Activated CD8-positive, alpha-beta T cell treated with anti-CD3 and anti-CD28 coated beads for 36 hours (primary cell): ENCODE measurements at regions of chr15 and their contacts with region 1.

Region 1: DNA sequence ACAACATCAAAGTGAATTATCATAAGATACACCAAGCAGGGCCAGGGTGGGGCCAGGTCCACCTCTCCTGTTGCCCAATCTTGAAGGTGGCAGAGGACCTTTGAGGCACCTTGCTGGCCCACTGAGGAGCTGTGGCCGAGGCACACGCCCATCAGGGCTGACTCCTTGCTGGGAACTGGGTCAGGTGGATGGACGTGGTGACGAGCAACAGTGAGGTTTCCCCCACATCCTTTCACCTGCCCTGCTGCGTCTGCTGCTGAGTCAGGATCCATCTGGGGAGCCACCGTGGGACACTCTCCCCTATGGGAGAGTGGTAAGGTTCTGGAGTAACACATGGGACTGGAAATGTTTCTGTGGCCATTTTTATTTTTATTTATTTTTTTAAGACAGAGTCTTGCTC is 17.3 kb upstream of the FURIN start:
- DNase-seq: peak; percentile 76
- ATAC-seq: peak; percentile 44
- H3K4me3 Mint-ChIP-seq: peak overlapping the region; percentile 0
- H3K27ac Mint-ChIP-seq: peak overlapping the region; percentile 93
- H3K4me1 Mint-ChIP-seq: peaks cover 52% of the 10 kb centered on the region
- H3K27me3 Mint-ChIP-seq: no peaks in the 10 kb centered on the region
- CTCF ChIP-seq: no peak

Region 2: GRCh38 chr15:90829942-90830440 is 21.1 kb before region 1 on chr15:
- CTCF ChIA-PET with region 1: interaction called, 4 read pairs
- POLR2A ChIA-PET with region 1: interaction called, 16 read pairs
- intact Hi-C with region 1: no loop called
- DNase-seq: peak; percentile 86
- ATAC-seq: peak; percentile 90
- H3K4me3 Mint-ChIP-seq: peak overlapping the region; percentile 44
- H3K27ac Mint-ChIP-seq: peak overlapping the region; percentile 88
- H3K4me1 Mint-ChIP-seq: peaks cover 29% of the 10 kb centered on the region
- H3K27me3 Mint-ChIP-seq: no peaks in the 10 kb centered on the region
- CTCF ChIP-seq: no peak

Region 3: DNA sequence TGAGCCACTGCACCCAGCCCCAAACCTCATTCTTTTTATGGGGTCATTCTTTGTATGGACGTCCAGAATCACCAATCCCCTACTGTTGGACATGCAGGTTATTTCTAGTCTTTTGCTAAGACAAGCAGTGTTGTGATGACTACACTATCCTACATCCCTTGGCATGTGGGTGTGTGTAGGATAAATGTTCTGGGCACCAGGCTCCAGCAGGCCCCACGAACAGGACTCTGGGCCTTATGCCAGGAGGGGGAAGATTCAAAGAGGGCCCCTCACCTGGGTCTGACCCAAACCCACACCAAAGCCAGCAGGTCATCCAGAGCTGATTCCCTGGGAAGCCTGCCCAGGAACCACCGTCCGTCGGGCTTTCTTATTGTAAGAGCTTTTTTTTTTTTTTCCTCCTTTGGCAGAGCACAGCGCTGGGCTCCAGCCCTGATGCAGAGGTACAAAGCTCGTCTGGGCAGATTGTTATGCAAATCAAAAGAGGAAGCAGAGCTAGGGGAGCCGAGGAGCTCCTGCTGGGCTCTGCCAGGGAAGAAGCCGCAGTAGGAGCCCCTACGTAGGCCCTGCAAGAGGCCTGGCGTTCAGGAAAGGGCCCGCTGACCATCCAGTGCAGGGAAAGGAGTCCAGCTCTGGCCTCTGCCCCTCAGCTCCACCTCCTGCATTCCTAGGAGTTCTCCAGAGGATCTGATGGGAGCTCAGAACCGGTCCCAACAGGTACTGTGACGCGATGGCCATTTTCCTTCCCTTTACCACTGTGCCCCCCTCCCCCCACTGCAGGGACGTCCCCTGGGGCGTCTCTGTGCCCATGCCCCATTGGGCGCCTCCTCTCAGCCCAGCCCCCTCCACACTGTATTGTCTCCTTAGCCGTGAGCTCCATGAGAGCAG is 11.7 kb before region 1 on chr15:
- CTCF ChIA-PET with region 1: interaction called, 4 read pairs
- POLR2A ChIA-PET with region 1: interaction called, 27 read pairs
- intact Hi-C with region 1: no loop called
- DNase-seq: no peak
- ATAC-seq: no peak
- H3K4me3 Mint-ChIP-seq: peak overlapping the region; percentile 63
- H3K27ac Mint-ChIP-seq: peak overlapping the region; percentile 52
- H3K4me1 Mint-ChIP-seq: peaks cover 41% of the 10 kb centered on the region
- H3K27me3 Mint-ChIP-seq: no peaks in the 10 kb centered on the region
- CTCF ChIP-seq: no peak

Region 4: GRCh38 chr15:90869601-90870353 is 18.7 kb after region 1 on chr15:
- CTCF ChIA-PET with region 1: no interaction called
- POLR2A ChIA-PET with region 1: interaction called, 13 read pairs
- intact Hi-C with region 1: loop called (anchors 2 kb)
- DNase-seq: peak; percentile 71
- ATAC-seq: peak; percentile 61
- H3K4me3 Mint-ChIP-seq: peak overlapping the region; percentile 90
- H3K27ac Mint-ChIP-seq: peak overlapping the region; percentile 94
- H3K4me1 Mint-ChIP-seq: peaks cover 51% of the 10 kb centered on the region
- H3K27me3 Mint-ChIP-seq: peaks cover 1% of the 10 kb centered on the region
- CTCF ChIP-seq: no peak

Region 5: GRCh38 chr15:92097474-92098178 is 1246.5 kb after region 1 on chr15:
- CTCF ChIA-PET with region 1: no interaction called
- POLR2A ChIA-PET with region 1: no interaction called
- intact Hi-C with region 1: no loop called
- DNase-seq: peak; percentile 71
- ATAC-seq: peak; percentile 84
- H3K4me3 Mint-ChIP-seq: no peak overlapping the region
- H3K27ac Mint-ChIP-seq: no peak overlapping the region
- H3K4me1 Mint-ChIP-seq: peaks cover 36% of the 10 kb centered on the region
- H3K27me3 Mint-ChIP-seq: no peaks in the 10 kb centered on the region
- CTCF ChIP-seq: peak; percentile 83